Natural killer cell (primary cell): ENCODE measurements at regions of chr19 and their contacts with region 1.

Region 1: GRCh38 chr19:10112895-10113591 is 1.6 kb downstream of the P2RY11 start:
- DNase-seq: peak; percentile 68 to 85
- ATAC-seq: peak; percentile 61 to 77 (median 62)
- H3K4me3 ChIP-seq: no peak overlapping the region
- H3K4me3 Mint-ChIP-seq: peak overlapping the region; percentile 88
- H3K27ac ChIP-seq: peak overlapping the region; percentile 93
- H3K27ac Mint-ChIP-seq: peak overlapping the region; percentile 95 to 98
- H3K4me1 ChIP-seq: peaks cover 91% of the 10 kb centered on the region
- H3K4me1 Mint-ChIP-seq: peaks cover 43 to 74% of the 10 kb centered on the region in 2 donors
- H3K27me3 ChIP-seq: no peaks in the 10 kb centered on the region
- H3K27me3 Mint-ChIP-seq: no peaks in the 10 kb centered on the region
- CTCF ChIP-seq: peak; percentile 71

Region 2: DNA sequence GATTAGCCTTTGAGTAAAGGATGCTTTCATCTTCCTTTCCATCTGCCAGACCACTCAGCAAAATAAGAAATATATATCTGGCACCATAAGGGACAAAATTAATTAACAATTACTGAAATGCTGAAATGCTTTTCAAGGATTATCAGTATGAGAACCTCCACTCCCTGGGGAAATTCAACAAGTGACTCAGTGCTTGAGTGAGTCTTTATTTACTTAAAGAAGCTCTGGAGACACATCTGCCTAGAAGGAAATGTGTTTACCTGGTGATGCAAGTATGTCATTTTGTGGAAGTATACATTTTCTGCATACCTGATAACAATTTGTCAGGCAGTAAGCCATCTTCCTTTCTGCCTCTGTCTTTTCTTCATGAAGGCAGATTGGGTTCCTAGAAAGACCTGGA is 638.1 kb before region 1 on chr19:
- intact Hi-C with region 1: no loop called
- DNase-seq: no peak
- ATAC-seq: no peak
- H3K4me3 ChIP-seq: no peak overlapping the region
- H3K4me3 Mint-ChIP-seq: no peak overlapping the region
- H3K27ac ChIP-seq: no peak overlapping the region
- H3K27ac Mint-ChIP-seq: no peak overlapping the region
- H3K4me1 ChIP-seq: no peaks in the 10 kb centered on the region
- H3K4me1 Mint-ChIP-seq: no peaks in the 10 kb centered on the region
- H3K27me3 ChIP-seq: no peaks in the 10 kb centered on the region
- H3K27me3 Mint-ChIP-seq: peaks cover 0 to 3% of the 10 kb centered on the region in 2 donors
- CTCF ChIP-seq: no peak

Region 3: GRCh38 chr19:10074153-10074552 is 38.9 kb before region 1 on chr19:
- intact Hi-C with region 1: loop called (anchors 2 kb)
- DNase-seq: peak in 1 of 2 donors; percentile 81
- ATAC-seq: peak; percentile 71 to 99 (median 92)
- H3K4me3 ChIP-seq: no peak overlapping the region
- H3K4me3 Mint-ChIP-seq: no peak overlapping the region
- H3K27ac ChIP-seq: no peak overlapping the region
- H3K27ac Mint-ChIP-seq: peak overlapping the region in 1 of 2 donors; percentile 16
- H3K4me1 ChIP-seq: no peaks in the 10 kb centered on the region
- H3K4me1 Mint-ChIP-seq: no peaks in the 10 kb centered on the region
- H3K27me3 ChIP-seq: no peaks in the 10 kb centered on the region
- H3K27me3 Mint-ChIP-seq: peaks cover 0 to 4% of the 10 kb centered on the region in 2 donors
- CTCF ChIP-seq: peak; percentile 64

Region 4: DNA sequence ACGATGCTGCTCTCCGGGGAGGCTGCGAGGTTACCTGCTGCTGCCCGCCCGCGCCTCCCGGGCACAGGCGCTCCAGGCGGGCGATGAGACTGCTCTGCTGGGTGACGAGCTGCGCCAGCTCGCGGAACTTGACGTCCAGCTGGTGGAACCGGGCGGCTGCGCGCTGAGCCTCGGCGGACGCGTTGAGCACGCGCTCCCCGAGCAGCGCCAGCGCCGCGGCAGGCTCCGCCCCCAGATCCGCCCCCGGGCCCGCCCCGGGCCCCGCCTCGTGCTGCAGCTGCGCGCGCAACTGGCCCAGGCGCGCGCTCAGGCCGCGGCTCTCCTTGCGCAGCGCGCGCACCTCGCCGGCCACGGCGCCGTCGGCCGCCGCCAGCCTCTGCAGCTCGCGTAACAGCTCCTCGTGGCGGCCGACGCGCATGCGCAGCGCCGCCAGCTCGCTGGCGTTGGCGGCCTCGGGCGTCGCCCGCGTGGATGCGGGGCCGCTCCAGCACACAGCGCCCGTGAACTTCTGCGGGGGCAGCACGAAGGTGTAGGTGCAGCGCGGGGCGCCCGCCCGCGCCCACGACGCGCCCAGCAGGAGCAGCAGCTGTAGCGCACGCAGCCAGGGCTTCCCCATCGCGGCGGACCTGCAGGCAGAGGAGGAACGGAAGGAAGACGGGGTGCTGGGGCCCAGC is 17.0 kb before region 1 on chr19:
- intact Hi-C with region 1: loop called (anchors 2 kb)
- DNase-seq: peak; percentile 94 to 97
- ATAC-seq: peak; percentile 93 to 96 (median 94)
- H3K4me3 ChIP-seq: peak overlapping the region; percentile 28
- H3K4me3 Mint-ChIP-seq: peak overlapping the region; percentile 71
- H3K27ac ChIP-seq: peak overlapping the region; percentile 71
- H3K27ac Mint-ChIP-seq: peak overlapping the region; percentile 78 to 79
- H3K4me1 ChIP-seq: peaks cover 53% of the 10 kb centered on the region
- H3K4me1 Mint-ChIP-seq: peaks cover 29 to 32% of the 10 kb centered on the region in 2 donors
- H3K27me3 ChIP-seq: no peaks in the 10 kb centered on the region
- H3K27me3 Mint-ChIP-seq: no peaks in the 10 kb centered on the region
- CTCF ChIP-seq: no peak